Heart right ventricle (tissue), 16 donors: ENCODE measurements at regions of chr12 and their contacts with region 1.

Region 1: GRCh38 chr12:112891093-112892024 is 15.4 kb upstream of the OAS1 start:
- DNase-seq: peak in 1 of 2 donors; percentile 9
- ATAC-seq: peak in 2 of 8 donors; percentile 25 to 47
- H3K4me3 ChIP-seq: no peak overlapping the region
- H3K27ac ChIP-seq: no peak overlapping the region
- H3K4me1 ChIP-seq: peaks cover 0 to 31% (median 0%) of the 10 kb centered on the region in 9 donors
- H3K27me3 ChIP-seq: peaks cover 0 to 19% (median 5%) of the 10 kb centered on the region in 7 donors
- CTCF ChIP-seq: no peak

Region 2: DNA sequence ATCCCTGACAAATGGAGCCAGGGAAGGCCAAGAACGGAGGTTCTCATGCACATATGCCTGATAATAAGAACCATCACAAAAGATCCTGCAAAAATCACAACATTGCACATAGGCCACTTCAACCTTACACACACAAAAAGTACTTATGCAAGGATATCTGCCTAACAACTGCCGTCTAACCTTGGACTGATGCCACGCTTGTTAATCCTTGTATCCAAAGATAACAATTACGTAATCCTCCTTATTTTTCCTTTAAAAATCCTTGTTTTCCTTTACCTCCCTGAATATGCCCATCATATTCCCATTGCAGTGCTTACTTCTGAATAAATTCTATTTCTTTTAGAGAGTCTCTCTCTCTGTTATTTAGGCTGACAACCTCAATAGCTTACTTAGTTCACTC is 937.9 kb before region 1 on chr12:
- intact Hi-C with region 1: no loop called
- DNase-seq: no peak
- ATAC-seq: no peak
- H3K4me3 ChIP-seq: no peak overlapping the region
- H3K27ac ChIP-seq: no peak overlapping the region
- H3K4me1 ChIP-seq: peaks cover 0 to 8% (median 0%) of the 10 kb centered on the region in 9 donors
- H3K27me3 ChIP-seq: no peaks in the 10 kb centered on the region
- CTCF ChIP-seq: no peak

Region 3: GRCh38 chr12:113005754-113006153 is 114.4 kb after region 1 on chr12:
- intact Hi-C with region 1: no loop called
- DNase-seq: no peak
- ATAC-seq: no peak
- H3K4me3 ChIP-seq: no peak overlapping the region
- H3K27ac ChIP-seq: no peak overlapping the region
- H3K4me1 ChIP-seq: no peaks in the 10 kb centered on the region
- H3K27me3 ChIP-seq: no peaks in the 10 kb centered on the region
- CTCF ChIP-seq: peak in 1 of 9 donors; percentile 31

Region 4: DNA sequence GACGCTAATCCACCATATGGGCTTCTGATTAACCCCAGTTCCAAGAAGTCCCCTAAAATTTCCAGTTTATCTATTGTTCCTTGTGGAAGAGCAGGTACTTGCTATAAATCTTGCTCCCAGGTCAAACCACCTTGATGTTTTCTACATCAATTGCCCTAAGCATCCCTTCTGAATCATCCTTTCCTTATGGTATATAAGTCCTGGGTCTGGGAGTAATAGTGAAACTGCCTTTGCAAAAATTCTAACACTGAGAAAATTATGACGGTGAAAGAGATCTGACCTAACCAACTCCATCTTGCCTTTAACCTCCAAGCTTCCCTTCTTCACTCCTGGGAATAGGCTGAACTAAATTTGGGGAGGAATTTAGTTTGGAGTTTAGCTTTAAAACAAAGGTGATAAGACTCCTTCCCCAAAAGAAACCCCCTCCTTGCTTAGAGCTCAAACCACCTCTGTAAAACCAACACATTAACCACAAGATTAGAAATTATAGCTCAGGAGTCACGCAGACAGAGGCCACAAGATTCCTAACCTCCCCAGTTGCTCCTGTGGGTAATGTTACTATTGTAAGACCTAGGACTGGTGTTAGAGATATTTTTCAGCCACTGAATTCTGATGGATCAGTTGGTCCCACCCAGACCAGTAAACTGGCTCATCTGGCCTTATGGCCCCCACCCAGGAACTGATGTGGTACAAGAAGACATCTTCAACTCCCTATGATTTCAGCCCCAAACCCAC is 131.4 kb after region 1 on chr12:
- intact Hi-C with region 1: loop called in 1 of 10 experiments (anchors 10 kb)
- DNase-seq: no peak
- ATAC-seq: no peak
- H3K4me3 ChIP-seq: no peak overlapping the region
- H3K27ac ChIP-seq: no peak overlapping the region
- H3K4me1 ChIP-seq: peaks cover 0 to 6% (median 0%) of the 10 kb centered on the region in 9 donors
- H3K27me3 ChIP-seq: peaks cover 0 to 20% (median 6%) of the 10 kb centered on the region in 7 donors
- CTCF ChIP-seq: no peak